Natural killer cell (primary cell): ENCODE measurements at regions of chr4 and their contacts with region 1.

Region 1: GRCh38 chr4:20895988-20896387 is 195.7 kb downstream of the PACRGL start:
- DNase-seq: peak in 1 of 2 donors; percentile 17
- ATAC-seq: peak; percentile 89 to 98 (median 90)
- H3K4me3 ChIP-seq: no peak overlapping the region
- H3K4me3 Mint-ChIP-seq: peak overlapping the region; percentile 80
- H3K27ac ChIP-seq: peak overlapping the region; percentile 81
- H3K27ac Mint-ChIP-seq: peak overlapping the region; percentile 88 to 93
- H3K4me1 ChIP-seq: peaks cover 7% of the 10 kb centered on the region
- H3K4me1 Mint-ChIP-seq: peaks cover 42% of the 10 kb centered on the region in 2 donors
- H3K27me3 ChIP-seq: no peaks in the 10 kb centered on the region
- H3K27me3 Mint-ChIP-seq: no peaks in the 10 kb centered on the region
- CTCF ChIP-seq: no peak

Region 2: DNA sequence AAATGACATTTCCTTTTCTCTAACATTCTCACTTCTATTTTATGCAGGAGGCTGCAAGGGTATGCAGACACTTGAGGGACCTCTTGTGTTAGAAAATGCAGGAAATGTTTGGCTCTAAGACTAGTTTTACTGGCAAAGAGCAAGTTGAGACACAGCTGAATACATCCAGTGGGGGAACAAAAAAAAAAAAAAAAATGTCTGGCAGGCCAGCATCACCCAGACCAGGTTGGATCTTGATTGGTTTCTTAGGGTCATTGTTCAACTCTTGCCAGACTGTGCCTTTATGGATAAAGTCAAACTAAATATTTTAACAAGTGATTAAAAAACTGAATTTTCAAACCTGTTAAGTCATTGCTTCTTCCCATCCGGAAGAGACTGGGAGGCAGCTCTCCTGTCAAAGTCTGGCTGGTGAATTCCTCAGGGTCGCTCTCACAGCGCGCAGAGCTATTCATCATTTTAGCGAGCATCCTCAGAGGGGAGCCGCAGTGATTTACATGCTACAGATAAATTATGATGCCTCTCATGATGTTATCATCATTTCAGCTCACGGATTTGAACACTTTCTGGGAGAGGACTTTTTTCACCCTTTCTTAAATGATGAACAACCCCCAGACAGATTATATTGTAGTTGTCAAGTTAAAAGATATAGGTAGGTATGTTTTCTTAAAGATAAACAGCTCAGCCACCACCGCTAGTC is 219.3 kb before region 1 on chr4:
- intact Hi-C with region 1: no loop called
- DNase-seq: no peak
- ATAC-seq: no peak
- H3K4me3 ChIP-seq: no peak overlapping the region
- H3K4me3 Mint-ChIP-seq: no peak overlapping the region
- H3K27ac ChIP-seq: no peak overlapping the region
- H3K27ac Mint-ChIP-seq: no peak overlapping the region
- H3K4me1 ChIP-seq: no peaks in the 10 kb centered on the region
- H3K4me1 Mint-ChIP-seq: no peaks in the 10 kb centered on the region
- H3K27me3 ChIP-seq: peaks cover 3% of the 10 kb centered on the region
- H3K27me3 Mint-ChIP-seq: peaks cover 10 to 14% of the 10 kb centered on the region in 2 donors
- CTCF ChIP-seq: no peak

Region 3: DNA sequence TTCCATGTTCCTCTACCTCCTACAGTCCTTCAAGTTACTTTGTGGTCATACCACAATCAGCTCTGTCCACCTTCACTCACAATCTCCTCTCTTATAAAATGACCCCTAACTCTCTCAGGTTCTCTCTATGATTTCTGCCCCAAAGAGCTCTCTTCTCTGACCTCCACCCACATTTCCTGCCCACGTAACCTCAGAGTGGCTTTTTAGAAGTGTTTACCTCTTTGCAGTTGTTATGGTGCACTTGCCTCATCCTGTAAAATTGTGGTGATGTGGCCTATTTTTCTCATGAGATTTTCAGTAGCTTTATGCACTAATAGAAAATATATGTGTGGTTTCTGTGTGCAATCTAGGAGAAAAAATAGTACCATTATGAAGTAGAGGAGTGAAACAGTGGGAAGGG is 20.1 kb after region 1 on chr4:
- intact Hi-C with region 1: loop called (anchors 2 kb)
- DNase-seq: peak; percentile 49 to 57
- ATAC-seq: peak; percentile 74 to 96 (median 83)
- H3K4me3 ChIP-seq: no peak overlapping the region
- H3K4me3 Mint-ChIP-seq: peak overlapping the region; percentile 70
- H3K27ac ChIP-seq: peak overlapping the region; percentile 66
- H3K27ac Mint-ChIP-seq: peak overlapping the region; percentile 78
- H3K4me1 ChIP-seq: peaks cover 13% of the 10 kb centered on the region
- H3K4me1 Mint-ChIP-seq: peaks cover 43 to 48% of the 10 kb centered on the region in 2 donors
- H3K27me3 ChIP-seq: no peaks in the 10 kb centered on the region
- H3K27me3 Mint-ChIP-seq: no peaks in the 10 kb centered on the region
- CTCF ChIP-seq: no peak